Activated CD4-positive, alpha-beta memory T cell treated with anti-CD3 and anti-CD28 coated beads, Interleukin-2, amount 10 ng/mL, durations not matched to agents 7 days and 5 days (primary cell): ENCODE measurements at regions of chr12 and their contacts with region 1.

Region 1: GRCh38 chr12:18861287-18861858 is 123.5 kb downstream of the CAPZA3 start:
- DNase-seq: no peak
- H3K4me3 Mint-ChIP-seq: no peak overlapping the region
- H3K27ac Mint-ChIP-seq: no peak overlapping the region
- H3K4me1 Mint-ChIP-seq: no peaks in the 10 kb centered on the region
- H3K27me3 Mint-ChIP-seq: peaks cover 8% of the 10 kb centered on the region

Region 2: DNA sequence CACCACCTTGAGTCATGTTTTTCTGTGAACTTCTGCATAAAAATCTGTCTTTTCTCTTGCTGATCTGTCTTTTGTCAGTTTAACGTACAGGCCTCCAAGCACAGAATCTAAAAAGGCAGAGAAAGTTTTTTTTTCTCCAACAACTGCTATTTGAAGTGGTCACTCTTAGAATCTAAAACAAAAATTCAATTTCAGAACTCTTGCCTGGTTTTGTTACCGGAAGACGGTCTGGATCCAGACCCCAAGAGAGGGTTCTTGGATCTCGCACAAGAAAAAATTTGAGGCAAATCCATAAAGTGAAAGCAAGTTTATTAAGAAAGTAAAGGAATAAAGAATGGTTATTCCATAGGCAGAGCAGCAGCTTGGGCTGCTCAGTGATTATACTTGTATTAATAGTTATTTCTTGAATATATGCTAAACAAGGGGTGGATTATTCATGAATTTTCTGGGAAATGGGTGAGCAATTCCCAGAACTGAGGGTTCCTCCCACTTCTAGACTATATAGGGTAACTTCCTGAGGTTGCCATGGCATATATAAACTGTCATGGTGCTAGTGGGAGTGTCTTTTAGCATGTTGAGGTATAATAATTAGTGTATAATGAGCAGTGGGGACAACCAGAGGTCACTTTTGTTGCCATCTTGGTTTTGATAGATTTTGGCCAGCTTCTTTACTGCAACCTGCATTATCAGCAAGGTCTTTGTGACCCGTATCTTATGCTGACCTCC is 118.2 kb after region 1 on chr12:
- CTCF ChIA-PET with region 1: no interaction called
- POLR2A ChIA-PET with region 1: no interaction called
- DNase-seq: no peak
- H3K4me3 Mint-ChIP-seq: no peak overlapping the region
- H3K27ac Mint-ChIP-seq: no peak overlapping the region
- H3K4me1 Mint-ChIP-seq: no peaks in the 10 kb centered on the region
- H3K27me3 Mint-ChIP-seq: no peaks in the 10 kb centered on the region

Region 3: GRCh38 chr12:19186722-19187661 is 325.6 kb after region 1 on chr12:
- CTCF ChIA-PET with region 1: interaction called, 10 read pairs
- POLR2A ChIA-PET with region 1: no interaction called
- DNase-seq: no peak
- H3K4me3 Mint-ChIP-seq: no peak overlapping the region
- H3K27ac Mint-ChIP-seq: no peak overlapping the region
- H3K4me1 Mint-ChIP-seq: no peaks in the 10 kb centered on the region
- H3K27me3 Mint-ChIP-seq: no peaks in the 10 kb centered on the region